Psoas muscle (tissue), 8 donors: ENCODE measurements at regions of chr17 and their contacts with region 1.

Region 1: GRCh38 chr17:22470411-22471175 is 778.3 kb downstream of the KCNJ18 start:
- DNase-seq: no peak
- ATAC-seq: no peak
- H3K4me3 ChIP-seq: no peak overlapping the region
- H3K27ac ChIP-seq: no peak overlapping the region
- H3K4me1 ChIP-seq: no peaks in the 10 kb centered on the region
- H3K27me3 ChIP-seq: no peaks in the 10 kb centered on the region
- CTCF ChIP-seq: no peak

Region 2: DNA sequence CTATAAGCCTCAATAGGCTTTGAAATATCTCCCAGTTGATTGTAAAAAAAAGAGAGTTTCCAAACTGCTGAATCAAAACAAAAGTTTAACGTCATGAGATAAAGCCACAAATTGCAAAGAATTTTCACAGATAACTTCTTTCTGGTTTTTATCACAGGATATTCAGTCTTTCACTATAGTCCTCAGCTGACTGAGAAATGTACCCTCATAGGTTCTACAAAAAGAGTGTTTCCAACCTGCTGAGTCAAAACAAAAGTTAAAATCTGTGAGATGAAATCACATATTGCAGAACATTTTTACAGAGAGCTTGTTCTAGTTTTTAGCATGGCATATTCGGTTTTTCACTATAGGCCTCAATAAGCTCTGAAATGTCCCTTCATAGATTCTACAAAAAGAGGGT is 219.1 kb before region 1 on chr17:
- intact Hi-C with region 1: no loop called
- DNase-seq: no peak
- ATAC-seq: no peak
- H3K4me3 ChIP-seq: no peak overlapping the region
- H3K27ac ChIP-seq: no peak overlapping the region
- H3K4me1 ChIP-seq: no peaks in the 10 kb centered on the region
- H3K27me3 ChIP-seq: no peaks in the 10 kb centered on the region
- CTCF ChIP-seq: no peak

Region 3: DNA sequence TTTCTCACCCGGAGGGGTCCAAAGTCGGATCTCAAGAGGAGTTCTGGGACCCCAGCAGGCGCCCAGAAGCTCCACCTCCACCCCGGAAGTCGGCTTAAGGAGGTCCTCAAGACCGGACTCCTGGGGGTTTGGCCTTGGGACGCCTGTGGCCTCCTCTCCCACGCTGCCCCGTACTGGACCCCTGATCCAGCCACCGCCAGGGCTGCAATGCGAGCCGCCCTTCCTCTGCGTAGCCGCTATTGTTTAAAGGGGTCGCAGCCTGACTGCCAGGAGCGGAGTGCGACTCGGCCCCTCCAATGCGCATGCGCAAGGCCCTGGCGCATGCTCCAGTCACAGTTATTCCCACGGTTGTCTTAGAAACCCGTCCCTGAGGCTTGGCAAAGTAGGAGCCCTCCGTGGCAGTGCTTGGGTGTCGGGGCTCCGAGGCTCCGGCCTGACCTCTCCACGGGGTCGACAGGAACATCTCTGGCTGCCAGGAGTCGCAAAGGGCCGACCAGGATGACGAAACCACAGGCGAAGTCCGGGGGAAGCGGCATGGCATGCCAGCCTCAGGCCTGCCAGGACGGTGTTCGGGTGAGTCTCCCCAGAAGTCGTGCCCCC is 59.3 kb before region 1 on chr17:
- intact Hi-C with region 1: loop called in 1 of 2 experiments (anchors 10 kb)
- DNase-seq: no peak
- ATAC-seq: no peak
- H3K4me3 ChIP-seq: no peak overlapping the region
- H3K27ac ChIP-seq: no peak overlapping the region
- H3K4me1 ChIP-seq: no peaks in the 10 kb centered on the region
- H3K27me3 ChIP-seq: no peaks in the 10 kb centered on the region
- CTCF ChIP-seq: no peak

Region 4: GRCh38 chr17:22569459-22570143 is 99.0 kb after region 1 on chr17:
- intact Hi-C with region 1: no loop called
- DNase-seq: no peak
- ATAC-seq: no peak
- H3K4me3 ChIP-seq: no peak overlapping the region
- H3K27ac ChIP-seq: no peak overlapping the region
- H3K4me1 ChIP-seq: no peaks in the 10 kb centered on the region
- H3K27me3 ChIP-seq: no peaks in the 10 kb centered on the region
- CTCF ChIP-seq: no peak